ENCODE measurements at regions of chr3 and their contacts with region 1.

Region 1: DNA sequence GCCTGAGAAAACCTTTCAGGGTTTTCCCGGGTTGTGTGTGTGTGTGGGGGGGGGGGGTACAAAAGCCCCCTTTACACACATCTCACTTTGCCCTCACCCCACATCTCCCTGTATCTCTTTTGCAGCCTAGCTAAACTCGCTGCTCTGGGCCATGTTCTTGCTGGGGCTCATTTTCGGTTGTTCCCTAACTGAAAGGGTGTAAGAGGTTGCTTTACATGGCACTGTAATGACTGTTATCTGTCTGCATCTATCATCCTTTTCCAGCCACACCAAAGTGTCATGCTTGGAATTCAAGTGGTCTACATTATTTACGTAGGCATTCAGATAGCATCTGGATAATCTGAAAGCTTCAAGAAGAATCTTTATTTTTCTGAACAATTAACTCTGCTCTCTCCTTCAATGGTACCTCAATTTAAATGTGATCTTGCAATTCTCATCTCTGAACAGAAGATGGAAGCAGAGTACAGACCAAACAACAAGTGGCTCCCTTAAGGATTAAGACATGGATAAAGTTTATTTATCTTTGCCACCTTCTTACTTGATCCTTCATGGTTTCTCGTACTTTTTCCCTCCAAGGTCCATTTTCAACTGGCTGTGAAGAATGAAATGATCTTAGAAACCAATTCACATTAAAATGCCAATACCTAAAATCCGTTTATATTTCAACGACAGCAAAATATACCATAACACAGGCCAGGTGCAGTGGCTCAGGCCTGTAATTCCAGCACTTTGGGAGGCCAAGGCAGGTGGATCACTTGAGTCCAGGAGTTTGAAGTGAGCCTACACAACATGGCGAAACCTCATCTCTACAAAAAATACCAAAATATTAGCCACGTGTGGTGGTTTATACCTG is 34.9 kb downstream of the DCLK3 start:
- DNase-seq: peak; percentile 47 to 61
- ATAC-seq: peak; percentile 80 to 91; a peak in 5 of 6 replicates
- H3K4me3 ChIP-seq: no peak overlapping the region
- H3K27ac ChIP-seq: no peak overlapping the region
- H3K4me1 ChIP-seq: no peaks in the 10 kb centered on the region
- CTCF ChIP-seq: peak; percentile 90
- EP300 ChIP-seq: no peak
- POLR2A ChIP-seq: no peak
- RAD21 ChIP-seq: peak; percentile 90 to 92

Region 2: GRCh38 chr3:36714343-36715086 is 14.9 kb before region 1 on chr3:
- CTCF ChIA-PET with region 1: interaction called, 33 read pairs
- POLR2A ChIA-PET with region 1: no interaction called
- DNase-seq: no peak
- ATAC-seq: no peak
- H3K4me3 ChIP-seq: no peak overlapping the region
- H3K27ac ChIP-seq: no peak overlapping the region
- H3K4me1 ChIP-seq: no peaks in the 10 kb centered on the region
- CTCF ChIP-seq: no peak
- EP300 ChIP-seq: no peak
- POLR2A ChIP-seq: no peak
- RAD21 ChIP-seq: no peak

Region 3: DNA sequence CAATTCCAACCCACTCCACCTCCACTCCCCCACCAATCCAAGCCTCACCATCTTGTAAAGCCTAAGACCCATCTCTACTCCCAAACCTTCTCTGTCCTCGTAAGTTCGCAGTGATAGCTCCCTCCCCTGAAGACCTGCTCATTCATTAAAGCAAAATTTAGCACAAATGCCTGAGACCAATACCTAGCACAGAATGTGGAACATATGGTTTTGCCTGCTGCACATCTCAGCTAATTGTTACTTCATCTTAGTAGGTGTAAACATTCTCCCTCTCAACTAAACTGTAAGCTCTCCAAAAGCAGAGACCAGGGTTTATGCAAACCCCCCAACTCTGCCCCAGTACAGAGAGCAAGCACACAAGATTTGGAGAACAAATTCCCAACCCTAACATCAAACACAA is 14.4 kb after region 1 on chr3:
- CTCF ChIA-PET with region 1: interaction called, 17 read pairs
- POLR2A ChIA-PET with region 1: no interaction called
- DNase-seq: no peak
- ATAC-seq: no peak
- H3K4me3 ChIP-seq: no peak overlapping the region
- H3K27ac ChIP-seq: no peak overlapping the region
- H3K4me1 ChIP-seq: no peaks in the 10 kb centered on the region
- CTCF ChIP-seq: no peak
- EP300 ChIP-seq: no peak
- POLR2A ChIP-seq: no peak
- RAD21 ChIP-seq: no peak

Region 4: DNA sequence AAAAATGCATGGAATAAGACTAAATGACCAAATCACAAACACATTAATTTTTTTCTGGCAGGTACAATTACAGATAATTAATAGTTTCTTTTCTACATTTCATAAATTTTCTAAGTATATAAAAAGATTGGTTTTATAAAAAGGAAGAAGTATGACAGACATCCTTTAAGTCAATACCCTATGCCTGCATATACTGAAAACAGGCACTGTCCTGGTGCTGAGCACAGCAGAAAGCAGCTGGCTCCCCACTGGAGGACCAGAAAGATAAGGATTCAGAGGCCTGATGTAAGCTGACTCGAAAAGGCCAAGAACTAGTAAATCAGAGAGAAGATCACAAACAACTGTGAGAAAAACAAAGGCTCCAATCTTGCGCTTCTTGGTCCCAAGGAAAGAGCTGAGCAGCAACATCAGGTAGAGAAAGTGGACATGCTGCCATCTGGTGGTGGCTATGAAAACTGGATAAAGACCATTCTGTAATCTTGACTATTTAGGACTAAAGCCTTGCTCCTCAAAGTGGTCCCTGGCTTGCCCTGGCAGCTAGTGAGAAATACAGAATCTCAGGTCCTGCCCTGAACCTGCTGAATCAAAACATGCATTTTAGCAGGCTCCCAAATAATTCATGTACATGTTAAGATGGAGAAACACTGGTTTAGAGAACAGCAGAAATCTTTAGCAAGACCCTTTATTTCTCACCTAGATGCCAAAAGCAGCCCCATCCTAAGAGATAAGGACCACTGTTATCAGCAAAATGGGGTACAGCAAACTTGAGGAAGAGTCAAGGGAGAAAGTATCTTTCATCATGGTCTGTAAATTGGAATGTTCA is 139.4 kb after region 1 on chr3:
- CTCF ChIA-PET with region 1: interaction called, 54 read pairs
- POLR2A ChIA-PET with region 1: no interaction called
- DNase-seq: peak; percentile 59 to 69
- ATAC-seq: peak; percentile 97 to 98
- H3K4me3 ChIP-seq: no peak overlapping the region
- H3K27ac ChIP-seq: no peak overlapping the region
- H3K4me1 ChIP-seq: no peaks in the 10 kb centered on the region
- CTCF ChIP-seq: peak; percentile 83
- EP300 ChIP-seq: no peak
- POLR2A ChIP-seq: no peak
- RAD21 ChIP-seq: peak; percentile 72 to 80